PC-9 (cell line): ENCODE measurements at regions of chr1 and their contacts with region 1.

Region 1: GRCh38 chr1:62343911-62344310 is 24.7 kb upstream of the KANK4 start:
- DNase-seq: no peak
- H3K4me3 ChIP-seq: no peak overlapping the region
- H3K27ac ChIP-seq: no peak overlapping the region
- H3K4me1 ChIP-seq: no peaks in the 10 kb centered on the region
- H3K27me3 ChIP-seq: no peaks in the 10 kb centered on the region
- CTCF ChIP-seq: no peak

Region 2: DNA sequence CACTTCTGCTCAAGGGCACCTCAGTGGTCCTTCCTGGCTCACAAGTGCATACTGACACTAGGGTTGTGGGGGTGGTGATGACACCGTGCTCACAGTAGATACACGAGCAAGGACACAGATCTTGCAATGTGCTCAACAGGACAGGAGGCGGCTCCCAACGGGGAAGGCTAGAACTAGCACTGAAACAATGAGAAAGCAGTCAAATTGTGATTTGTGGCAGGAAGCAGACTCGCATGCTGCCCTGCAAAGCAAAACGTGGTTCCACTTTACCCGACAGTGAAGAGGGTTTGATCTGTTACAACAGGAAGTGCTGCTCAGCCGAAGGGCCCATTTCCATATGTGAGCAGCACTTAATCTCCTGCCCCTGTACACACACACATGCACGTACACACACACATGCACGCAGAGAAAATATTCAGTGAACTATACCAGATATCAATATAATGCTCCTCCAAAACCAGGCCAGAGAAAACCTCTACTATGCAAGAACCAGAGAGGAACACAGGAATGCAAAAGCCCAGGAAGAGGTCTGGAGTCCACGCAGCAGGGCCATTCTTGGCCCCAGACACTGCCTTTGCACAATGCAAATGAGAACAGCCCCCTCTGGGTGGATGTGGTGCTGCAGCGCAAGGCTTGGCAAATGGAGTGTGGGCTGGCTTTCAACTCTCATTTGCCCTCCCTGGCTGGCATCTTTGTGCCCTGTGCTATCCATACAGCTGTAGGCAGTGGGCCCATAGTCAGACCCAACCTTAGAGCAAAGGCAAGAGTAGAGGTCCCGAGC is 71.8 kb before region 1 on chr1:
- CTCF ChIA-PET with region 1: no interaction called
- POLR2A ChIA-PET with region 1: no interaction called
- intact Hi-C with region 1: no loop called
- DNase-seq: no peak
- H3K4me3 ChIP-seq: no peak overlapping the region
- H3K27ac ChIP-seq: no peak overlapping the region
- H3K4me1 ChIP-seq: peaks cover 6% of the 10 kb centered on the region; the same call in 1 of the 2 replicates
- H3K27me3 ChIP-seq: no peaks in the 10 kb centered on the region
- CTCF ChIP-seq: no peak

Region 3: DNA sequence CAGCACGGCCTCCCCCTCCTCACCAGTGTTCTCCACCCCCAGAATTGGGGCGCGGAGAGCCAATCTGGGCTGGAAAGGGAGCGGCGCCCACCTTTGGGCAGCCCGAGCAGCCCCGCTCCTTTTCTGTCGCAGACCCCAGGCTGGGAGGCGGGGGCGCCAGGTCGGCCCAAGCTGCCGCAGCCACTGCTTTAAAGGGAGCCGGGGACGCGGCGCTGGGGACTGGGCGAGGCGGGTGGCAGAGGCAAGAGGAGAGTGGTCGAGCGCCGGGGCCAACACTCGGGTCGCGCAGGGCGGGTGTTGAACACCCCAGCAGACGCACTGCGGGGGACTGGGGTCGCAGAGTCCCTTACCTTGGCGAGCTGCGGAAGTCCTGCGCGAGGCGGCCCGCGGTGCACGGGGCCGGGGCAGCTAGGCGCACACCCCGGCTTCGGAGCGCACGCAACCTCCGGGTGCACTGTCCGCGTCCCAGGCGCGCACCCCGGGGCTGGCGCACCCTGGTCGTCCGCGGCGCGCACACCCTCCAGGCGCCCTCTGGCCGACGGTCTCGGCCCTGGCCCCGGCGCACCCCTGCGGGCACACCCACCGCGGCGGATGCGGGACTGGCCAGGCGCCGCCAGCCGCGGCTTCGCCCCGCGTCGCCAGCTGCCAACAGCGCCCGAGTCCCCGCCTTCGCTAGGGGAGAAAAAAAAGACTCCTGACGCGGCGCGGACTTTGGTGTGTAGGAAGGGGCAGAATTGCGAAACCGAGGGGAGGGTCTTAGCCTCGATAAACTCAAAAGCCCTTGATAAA is 25.0 kb before region 1 on chr1 and contains the start of gene KANK4:
- CTCF ChIA-PET with region 1: no interaction called
- POLR2A ChIA-PET with region 1: interaction called, 30 read pairs
- intact Hi-C with region 1: no loop called
- DNase-seq: peak in 1 of 2 experiments; percentile 39
- H3K4me3 ChIP-seq: peak within 1 kb of the TSS; percentile 51; the same call in 1 of the 2 replicates
- H3K27ac ChIP-seq: no peak within 1 kb of the TSS
- H3K4me1 ChIP-seq: peaks cover 12% of the 10 kb centered on the region
- H3K27me3 ChIP-seq: 0 out of 2 replicates have a peak, but pooled peaks cover 9% of the 10 kb centered on the region
- CTCF ChIP-seq: no peak
- total RNA-seq, gene KANK4: 1.7 and 2.0 TPM in 2 replicates

Region 4: DNA sequence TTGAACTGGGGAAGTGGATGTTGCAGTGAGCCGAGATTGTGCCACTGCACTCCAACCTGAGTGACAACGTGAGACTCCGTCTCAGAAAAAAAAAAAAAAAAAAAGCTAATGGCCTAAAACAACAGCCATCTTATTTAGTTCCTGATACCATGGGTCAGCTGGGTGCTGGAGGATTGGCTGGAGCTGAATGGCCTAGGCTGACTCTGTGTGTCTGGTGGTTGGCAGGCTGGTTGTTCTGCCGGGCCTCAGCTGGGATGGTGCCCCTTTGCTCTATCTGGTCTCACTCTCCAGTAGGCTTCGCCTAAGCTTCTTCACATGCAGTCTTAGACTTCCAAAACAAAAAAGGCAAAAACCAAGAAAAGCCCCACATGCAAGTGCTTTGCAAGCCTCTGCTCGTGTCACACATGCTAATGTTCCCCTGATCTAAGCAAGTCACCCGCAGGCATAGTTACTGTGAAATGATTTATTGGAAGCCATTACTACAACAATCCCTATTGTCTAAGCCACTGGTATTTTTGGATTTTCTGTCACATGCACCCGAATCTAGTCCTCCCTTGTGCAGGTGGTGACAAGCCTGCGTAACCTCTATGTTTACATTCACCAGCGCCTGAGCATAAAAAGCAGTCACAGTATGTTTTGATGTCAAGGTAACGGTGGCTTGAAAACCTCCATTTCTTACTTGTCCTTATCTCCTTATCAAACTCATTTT is 14.9 kb after region 1 on chr1:
- CTCF ChIA-PET with region 1: no interaction called
- POLR2A ChIA-PET with region 1: no interaction called
- intact Hi-C with region 1: no loop called
- DNase-seq: no peak
- H3K4me3 ChIP-seq: no peak overlapping the region
- H3K27ac ChIP-seq: no peak overlapping the region
- H3K4me1 ChIP-seq: peaks cover 6% of the 10 kb centered on the region; the same call in 1 of the 2 replicates
- H3K27me3 ChIP-seq: no peaks in the 10 kb centered on the region
- CTCF ChIP-seq: no peak